ENCODE measurements at regions of chr1 and their contacts with region 1.

Region 1: DNA sequence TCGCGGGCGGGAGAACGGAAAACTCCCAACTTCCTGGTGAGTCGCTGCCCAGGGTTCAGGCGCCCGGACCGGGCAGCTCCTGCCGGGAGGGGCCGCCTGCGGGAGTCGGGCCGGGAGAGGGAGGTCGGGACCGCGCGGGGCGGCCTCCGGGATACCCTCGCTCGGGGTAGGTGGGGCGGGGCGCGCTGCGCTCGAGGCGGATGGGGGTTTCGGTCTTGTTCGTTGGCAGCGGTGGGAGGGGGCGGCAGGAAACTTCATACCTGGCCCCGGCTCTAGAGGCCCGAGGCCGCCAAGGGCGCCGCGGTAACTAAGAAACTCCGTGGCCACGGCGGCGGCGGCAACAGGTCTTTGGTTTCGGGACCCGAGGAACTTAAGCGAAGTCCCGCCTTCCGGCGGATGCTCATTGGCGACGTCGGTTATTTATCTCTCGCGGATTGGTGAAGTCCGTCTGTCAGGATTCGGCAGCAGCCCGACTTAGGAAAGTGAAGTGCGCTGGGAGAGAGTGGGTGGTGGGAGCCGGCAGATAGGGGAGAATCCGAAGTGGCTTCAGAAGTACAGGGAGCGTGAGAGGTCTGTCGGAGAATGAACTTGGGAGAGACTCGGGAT is 546 bp downstream of the NEK7 start:
- DNase-seq: peak; percentile 84 to 91
- ATAC-seq: peak; percentile 69 to 84 (median 75)
- H3K4me3 ChIP-seq: peak overlapping the region; percentile 81 to 97 (median 92)
- H3K27ac ChIP-seq: peak overlapping the region; percentile 94 to 100 (median 98)
- H3K4me1 ChIP-seq: peaks cover 0 to 79% (median 62%) of the 10 kb centered on the region in 9 donors
- H3K27me3 ChIP-seq: no peaks in the 10 kb centered on the region
- CTCF ChIP-seq: no peak

Region 2: DNA sequence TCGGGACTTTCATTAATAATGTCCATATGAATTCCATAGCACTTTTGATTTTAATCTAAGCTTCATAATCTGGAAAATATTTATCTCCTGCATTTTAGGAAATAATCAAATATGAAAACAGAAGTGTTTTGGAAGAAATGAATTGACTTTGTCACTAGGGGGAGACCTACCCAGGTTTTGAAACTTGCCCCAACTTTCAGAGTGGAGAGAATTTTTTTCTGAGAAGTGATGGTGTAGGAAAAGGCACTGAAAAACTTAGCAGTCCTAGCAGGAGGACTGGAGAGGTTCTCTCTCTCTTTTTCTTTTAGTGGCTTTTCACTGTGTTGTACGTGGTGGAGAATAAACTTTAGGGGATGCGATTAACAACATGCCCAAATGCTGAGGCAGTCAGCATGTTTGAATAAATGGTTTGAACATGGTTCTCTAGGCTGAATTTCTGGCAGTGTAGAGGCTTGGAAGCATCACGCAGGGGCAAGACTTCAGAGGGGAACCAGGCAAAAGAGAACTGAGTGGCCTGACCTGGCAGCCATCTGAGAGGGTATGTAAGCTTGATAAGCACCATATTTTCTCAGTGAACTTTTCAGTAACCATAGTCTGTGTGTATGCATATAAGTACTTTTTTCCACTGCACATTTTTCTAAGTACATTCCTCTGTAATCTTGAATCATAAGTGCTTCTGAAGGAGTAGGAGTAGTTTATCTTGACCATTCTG is 68.8 kb before region 1 on chr1:
- intact Hi-C with region 1: loop called in 2 of 10 experiments (anchors 5 kb)
- DNase-seq: no peak
- ATAC-seq: peak in 1 of 8 donors; percentile 55
- H3K4me3 ChIP-seq: no peak overlapping the region
- H3K27ac ChIP-seq: no peak overlapping the region
- H3K4me1 ChIP-seq: peaks cover 0 to 11% (median 0%) of the 10 kb centered on the region in 9 donors
- H3K27me3 ChIP-seq: no peaks in the 10 kb centered on the region
- CTCF ChIP-seq: peak; percentile 13 to 76 (median 67)

Region 3: DNA sequence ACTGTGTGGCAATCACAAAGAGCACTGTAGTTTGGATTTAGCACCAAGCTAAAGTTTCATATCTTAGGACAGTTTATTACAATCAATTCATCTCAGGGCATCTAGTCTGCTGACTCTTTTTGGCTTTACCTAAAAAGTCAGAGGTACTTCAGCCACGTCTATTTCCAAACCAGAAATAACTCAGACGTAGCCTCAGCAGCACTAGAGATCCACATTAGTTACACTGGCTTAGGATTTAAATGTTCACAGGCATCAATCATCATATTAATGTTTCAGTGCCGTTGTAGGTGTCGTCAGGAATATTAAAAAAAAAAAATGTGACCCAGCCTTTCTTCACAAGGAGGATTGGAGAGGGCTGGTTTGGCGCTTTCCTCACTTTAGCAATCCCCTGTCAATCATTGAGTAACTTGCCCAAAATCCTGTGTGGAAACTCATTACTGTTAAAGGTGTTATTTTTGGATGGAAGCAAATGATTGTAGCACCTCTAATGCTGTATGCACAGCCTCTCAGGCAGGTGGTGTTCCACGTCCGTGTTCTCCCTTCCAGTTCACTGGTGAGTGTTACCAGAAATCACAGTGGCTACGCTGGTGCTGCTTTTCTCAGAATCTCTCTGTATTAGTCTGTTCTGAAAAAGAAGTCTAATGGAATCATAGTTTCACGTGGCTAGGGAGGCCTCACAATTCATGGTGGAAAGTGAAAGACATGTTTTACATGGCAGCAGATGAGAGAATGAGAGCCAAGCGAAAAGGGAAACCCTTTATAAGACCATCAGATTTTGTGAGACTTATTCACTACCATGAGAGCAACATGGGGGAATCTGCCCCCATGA is 44.8 kb after region 1 on chr1:
- intact Hi-C with region 1: loop called in 2 of 10 experiments (anchors 5 kb)
- DNase-seq: no peak
- ATAC-seq: peak in 5 of 8 donors; percentile 26 to 70 (median 51)
- H3K4me3 ChIP-seq: no peak overlapping the region
- H3K27ac ChIP-seq: peak overlapping the region in 8 of 10 donors; percentile 22 to 48 (median 32)
- H3K4me1 ChIP-seq: peaks cover 0 to 95% (median 62%) of the 10 kb centered on the region in 9 donors
- H3K27me3 ChIP-seq: no peaks in the 10 kb centered on the region
- CTCF ChIP-seq: no peak

Region 4: DNA sequence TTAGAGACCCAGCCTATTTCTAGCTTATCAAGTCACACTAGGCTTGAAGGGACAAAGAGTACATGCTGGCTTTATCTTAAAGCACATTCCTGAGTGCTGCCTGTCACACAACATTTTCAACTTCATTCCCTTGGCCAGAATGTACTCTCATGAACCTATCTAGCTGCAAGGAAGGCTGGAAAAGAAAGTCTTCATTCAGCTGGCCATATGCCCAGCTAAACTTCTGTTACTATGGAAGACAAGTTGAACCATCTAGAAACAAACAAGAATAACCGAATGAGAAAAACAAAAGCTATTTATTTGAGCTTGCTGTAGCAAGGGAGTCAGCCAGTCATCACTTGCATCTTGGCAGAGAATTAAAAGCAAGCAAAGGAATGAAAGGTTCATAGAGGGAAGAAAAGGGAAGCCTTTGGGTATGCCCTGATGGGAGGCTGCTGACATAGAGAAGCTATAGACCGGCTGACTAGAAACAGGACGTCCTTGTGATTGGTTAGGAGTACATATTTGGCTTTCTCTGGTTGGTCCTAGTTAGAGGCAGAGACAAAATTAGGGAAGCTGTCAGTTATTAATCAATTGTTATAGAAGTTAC is 107.8 kb after region 1 on chr1:
- intact Hi-C with region 1: loop called in 6 of 10 experiments (anchors 5 to 10 kb)
- DNase-seq: peak in 1 of 2 donors; percentile 65
- ATAC-seq: peak; percentile 76 to 97 (median 92)
- H3K4me3 ChIP-seq: no peak overlapping the region
- H3K27ac ChIP-seq: peak overlapping the region in 9 of 10 donors; percentile 51 to 85 (median 71)
- H3K4me1 ChIP-seq: peaks cover 0 to 75% (median 43%) of the 10 kb centered on the region in 9 donors
- H3K27me3 ChIP-seq: no peaks in the 10 kb centered on the region
- CTCF ChIP-seq: no peak

Region 5: DNA sequence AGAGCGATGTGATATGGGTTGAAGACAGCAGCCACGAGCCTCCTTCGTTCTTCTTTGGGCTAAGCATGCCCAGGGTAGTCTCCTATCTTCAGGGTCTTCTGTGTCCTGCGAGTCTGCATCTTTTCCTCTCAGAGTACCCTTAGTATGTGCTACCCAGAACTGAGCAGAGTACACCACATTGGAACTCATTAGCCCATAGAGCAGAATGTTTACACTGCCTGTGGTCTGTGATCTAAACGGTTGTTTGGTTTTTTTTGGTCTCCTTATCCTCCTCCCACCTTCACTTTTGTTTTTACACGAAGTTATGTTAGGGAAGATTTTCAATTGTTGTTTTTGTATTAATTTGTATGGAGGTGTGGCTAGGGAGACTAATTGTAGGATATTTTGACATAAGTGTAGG is 125.9 kb after region 1 on chr1:
- intact Hi-C with region 1: loop called in 2 of 10 experiments (anchors 10 kb)
- DNase-seq: no peak
- ATAC-seq: peak in 1 of 8 donors; percentile 18
- H3K4me3 ChIP-seq: no peak overlapping the region
- H3K27ac ChIP-seq: no peak overlapping the region
- H3K4me1 ChIP-seq: peaks cover 0 to 13% (median 5%) of the 10 kb centered on the region in 9 donors
- H3K27me3 ChIP-seq: no peaks in the 10 kb centered on the region
- CTCF ChIP-seq: no peak